A673 (cell line): ENCODE measurements at regions of chr2 and their contacts with region 1.

Region 1: GRCh38 chr2:9364791-9365497 is 58.4 kb downstream of the ITGB1BP1 start:
- DNase-seq: no peak
- H3K4me3 ChIP-seq: no peak overlapping the region
- H3K27ac ChIP-seq: no peak overlapping the region
- H3K4me1 ChIP-seq: no peaks in the 10 kb centered on the region
- H3K27me3 ChIP-seq: no peaks in the 10 kb centered on the region
- CTCF ChIP-seq: no peak

Region 2: DNA sequence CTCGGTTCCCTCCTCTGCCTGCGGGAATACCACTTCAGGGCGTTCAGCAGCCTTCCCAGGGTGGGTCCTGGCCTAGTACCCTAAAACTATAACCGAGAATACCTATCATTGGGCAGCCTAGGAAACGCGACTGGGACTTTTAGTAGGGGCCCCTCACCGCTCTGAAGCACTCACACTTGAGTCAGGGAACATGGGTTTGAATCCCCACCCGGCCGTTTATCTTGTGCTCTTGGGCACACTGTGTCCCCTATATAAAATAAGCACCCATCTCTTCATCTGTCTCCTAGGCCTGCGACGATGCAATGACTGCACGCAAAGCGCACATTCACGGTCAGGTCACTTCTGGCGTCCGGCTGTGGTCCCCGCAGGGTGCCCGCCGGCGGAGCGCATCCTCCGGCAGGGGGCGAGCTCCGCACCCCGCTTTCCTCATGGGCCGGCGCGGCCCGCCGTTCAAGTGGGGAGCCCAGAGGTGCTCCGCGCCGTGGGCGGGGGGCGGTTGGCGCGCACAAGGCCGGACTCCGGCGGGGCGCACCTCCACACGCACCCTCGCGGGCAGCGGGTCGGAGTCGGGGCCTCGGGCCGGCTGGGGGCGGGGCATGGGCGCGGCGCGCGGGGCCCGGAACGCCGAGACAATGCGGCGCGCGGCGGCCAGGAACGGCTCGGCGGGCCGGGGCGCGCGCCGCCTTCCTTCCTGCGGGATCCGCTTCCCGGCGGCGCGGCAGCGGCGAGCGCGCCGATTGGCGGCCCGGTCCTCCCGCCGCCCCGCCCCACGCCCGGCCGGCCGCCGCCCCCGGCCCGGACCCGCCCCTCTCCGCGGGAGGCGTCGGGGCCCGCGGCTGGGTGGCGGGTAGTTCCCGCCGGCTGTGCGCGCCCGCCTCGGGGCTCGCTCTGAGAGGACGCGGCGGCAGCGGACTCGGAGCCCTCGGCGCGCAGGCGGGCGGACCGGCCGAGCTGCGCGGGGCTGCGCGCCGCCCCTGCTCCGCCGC is 158.7 kb before region 1 on chr2 and contains the start of gene ASAP2:
- CTCF ChIA-PET with region 1: no interaction called
- POLR2A ChIA-PET with region 1: no interaction called
- intact Hi-C with region 1: no loop called
- DNase-seq: peak; percentile 88
- H3K4me3 ChIP-seq: peak within 1 kb of the TSS; percentile 97
- H3K27ac ChIP-seq: peak within 1 kb of the TSS; percentile 86
- H3K4me1 ChIP-seq: peaks cover 24% of the 10 kb centered on the region
- H3K27me3 ChIP-seq: no peaks in the 10 kb centered on the region
- CTCF ChIP-seq: peak; percentile 82
- total RNA-seq, gene ASAP2: 45.1 and 46.8 TPM in 2 replicates

Region 3: GRCh38 chr2:9445089-9445488 is 80.1 kb after region 1 on chr2:
- CTCF ChIA-PET with region 1: no interaction called
- POLR2A ChIA-PET with region 1: interaction called, 16 read pairs
- intact Hi-C with region 1: no loop called
- DNase-seq: no peak
- H3K4me3 ChIP-seq: no peak overlapping the region
- H3K27ac ChIP-seq: no peak overlapping the region
- H3K4me1 ChIP-seq: no peaks in the 10 kb centered on the region
- H3K27me3 ChIP-seq: no peaks in the 10 kb centered on the region
- CTCF ChIP-seq: no peak